Activated B cell treated with CpG ODN at 0.5 μM for 24 hours (primary cell): ENCODE measurements at regions of chr3 and their contacts with region 1.

Region 1: GRCh38 chr3:69120879-69121464 is 1.4 kb downstream of the LMOD3 start:
- DNase-seq: peak; percentile 22
- ATAC-seq: peak; percentile 87
- H3K4me3 Mint-ChIP-seq: no peak overlapping the region
- H3K27ac Mint-ChIP-seq: no peak overlapping the region
- H3K4me1 Mint-ChIP-seq: peaks cover 4% of the 10 kb centered on the region
- H3K27me3 Mint-ChIP-seq: no peaks in the 10 kb centered on the region
- CTCF ChIP-seq: peak; percentile 99

Region 2: DNA sequence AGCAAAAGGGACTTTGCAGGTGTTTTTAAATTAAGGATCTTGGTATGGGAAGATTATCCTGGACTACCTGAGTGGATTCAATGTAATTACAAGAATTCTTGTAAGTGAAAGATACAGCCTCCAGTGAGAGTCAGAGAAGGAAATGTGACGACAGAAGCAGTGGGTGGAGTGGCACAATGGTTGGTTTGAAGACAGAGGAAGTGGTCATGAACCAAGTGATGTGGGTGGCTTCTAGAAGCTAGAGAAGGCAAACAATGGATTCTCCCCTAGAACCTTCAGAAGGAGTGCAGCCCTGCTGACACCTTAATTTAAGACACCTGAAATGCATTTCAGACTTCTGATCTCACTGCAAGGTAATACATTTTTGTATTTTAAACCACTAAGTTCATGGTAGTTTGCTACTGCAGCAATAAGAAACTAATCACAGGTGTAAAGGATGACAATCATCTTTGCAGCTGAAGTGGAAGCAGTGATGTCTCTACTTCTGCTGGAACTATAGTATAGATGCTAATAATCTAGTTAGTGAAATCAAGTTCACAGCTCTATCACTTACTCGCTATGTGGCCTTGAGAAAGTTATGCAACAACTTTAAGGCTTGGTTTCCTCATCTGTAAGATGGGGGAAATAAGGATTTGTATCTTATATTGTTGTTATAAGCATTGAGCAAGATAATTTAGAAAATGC is 1063.2 kb before region 1 on chr3:
- CTCF ChIA-PET with region 1: no interaction called
- POLR2A ChIA-PET with region 1: no interaction called
- intact Hi-C with region 1: no loop called
- DNase-seq: no peak
- ATAC-seq: no peak
- H3K4me3 Mint-ChIP-seq: no peak overlapping the region
- H3K27ac Mint-ChIP-seq: no peak overlapping the region
- H3K4me1 Mint-ChIP-seq: no peaks in the 10 kb centered on the region
- H3K27me3 Mint-ChIP-seq: no peaks in the 10 kb centered on the region
- CTCF ChIP-seq: no peak

Region 3: GRCh38 chr3:68378631-68379030 is 742.3 kb before region 1 on chr3:
- CTCF ChIA-PET with region 1: no interaction called
- POLR2A ChIA-PET with region 1: no interaction called
- intact Hi-C with region 1: no loop called
- DNase-seq: no peak
- ATAC-seq: no peak
- H3K4me3 Mint-ChIP-seq: no peak overlapping the region
- H3K27ac Mint-ChIP-seq: no peak overlapping the region
- H3K4me1 Mint-ChIP-seq: no peaks in the 10 kb centered on the region
- H3K27me3 Mint-ChIP-seq: no peaks in the 10 kb centered on the region
- CTCF ChIP-seq: no peak

Region 4: GRCh38 chr3:69051756-69052471 is 69.1 kb before region 1 on chr3 and contains the start of gene TMF1:
- CTCF ChIA-PET with region 1: interaction called, 18 read pairs
- POLR2A ChIA-PET with region 1: interaction called, 4 read pairs
- intact Hi-C with region 1: loop called (anchors 1 kb)
- DNase-seq: peak; percentile 92
- ATAC-seq: peak; percentile 86
- H3K4me3 Mint-ChIP-seq: peak within 1 kb of the TSS; percentile 95
- H3K27ac Mint-ChIP-seq: peak within 1 kb of the TSS; percentile 98
- H3K4me1 Mint-ChIP-seq: peaks cover 49% of the 10 kb centered on the region
- H3K27me3 Mint-ChIP-seq: no peaks in the 10 kb centered on the region
- CTCF ChIP-seq: no peak
- total RNA-seq, gene TMF1: 36.8 and 43.6 TPM in 2 replicates

Region 5: GRCh38 chr3:69092030-69092516 is 28.9 kb before region 1 on chr3:
- CTCF ChIA-PET with region 1: interaction called, 10 read pairs
- POLR2A ChIA-PET with region 1: no interaction called
- intact Hi-C with region 1: no loop called
- DNase-seq: no peak
- ATAC-seq: peak; percentile 80
- H3K4me3 Mint-ChIP-seq: peak overlapping the region; percentile 82
- H3K27ac Mint-ChIP-seq: peak overlapping the region; percentile 97
- H3K4me1 Mint-ChIP-seq: peaks cover 95% of the 10 kb centered on the region
- H3K27me3 Mint-ChIP-seq: no peaks in the 10 kb centered on the region
- CTCF ChIP-seq: no peak

Region 6: DNA sequence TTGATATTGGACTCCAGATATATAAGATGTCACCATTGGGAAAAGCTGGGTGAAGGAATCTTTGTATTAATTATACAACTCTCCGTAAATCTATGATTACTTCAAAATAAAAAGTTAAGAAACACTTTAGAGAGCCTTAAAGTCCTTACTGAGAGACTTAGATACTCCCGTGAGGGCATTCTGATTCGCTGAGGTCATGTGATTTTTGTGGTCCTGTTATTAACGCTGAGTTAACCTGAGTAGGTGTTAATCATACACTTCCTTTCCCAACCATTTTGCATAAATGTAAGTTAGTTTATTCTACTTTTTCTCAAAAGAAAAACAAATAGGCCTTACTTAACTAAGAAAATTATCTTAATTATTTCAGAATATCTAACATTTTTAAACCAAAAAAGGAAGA is 68.5 kb after region 1 on chr3:
- CTCF ChIA-PET with region 1: no interaction called
- POLR2A ChIA-PET with region 1: no interaction called
- intact Hi-C with region 1: no loop called
- DNase-seq: no peak
- ATAC-seq: no peak
- H3K4me3 Mint-ChIP-seq: no peak overlapping the region
- H3K27ac Mint-ChIP-seq: no peak overlapping the region
- H3K4me1 Mint-ChIP-seq: no peaks in the 10 kb centered on the region
- H3K27me3 Mint-ChIP-seq: no peaks in the 10 kb centered on the region
- CTCF ChIP-seq: no peak

Region 7: DNA sequence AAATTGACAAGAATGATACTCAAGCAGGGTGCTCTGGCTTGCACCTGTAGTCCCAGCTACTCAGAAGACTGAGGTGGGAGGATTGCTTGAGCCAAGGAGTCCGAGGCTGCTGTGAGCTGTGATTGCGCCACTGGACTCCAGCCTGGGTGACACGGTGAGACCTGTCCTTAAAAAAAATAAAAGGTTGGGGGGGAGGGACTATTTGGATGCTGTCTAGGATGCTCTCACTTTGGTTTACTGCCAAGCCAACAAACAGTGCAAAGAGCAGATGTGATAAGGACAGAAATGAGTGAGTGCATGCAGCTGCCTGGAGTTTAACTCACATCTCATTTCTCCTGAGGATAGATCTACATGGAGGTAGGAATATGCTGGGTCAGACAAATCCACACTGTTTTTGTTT is 135.0 kb after region 1 on chr3:
- CTCF ChIA-PET with region 1: no interaction called
- POLR2A ChIA-PET with region 1: no interaction called
- intact Hi-C with region 1: no loop called
- DNase-seq: no peak
- ATAC-seq: no peak
- H3K4me3 Mint-ChIP-seq: no peak overlapping the region
- H3K27ac Mint-ChIP-seq: no peak overlapping the region
- H3K4me1 Mint-ChIP-seq: no peaks in the 10 kb centered on the region
- H3K27me3 Mint-ChIP-seq: no peaks in the 10 kb centered on the region
- CTCF ChIP-seq: no peak

Region 8: DNA sequence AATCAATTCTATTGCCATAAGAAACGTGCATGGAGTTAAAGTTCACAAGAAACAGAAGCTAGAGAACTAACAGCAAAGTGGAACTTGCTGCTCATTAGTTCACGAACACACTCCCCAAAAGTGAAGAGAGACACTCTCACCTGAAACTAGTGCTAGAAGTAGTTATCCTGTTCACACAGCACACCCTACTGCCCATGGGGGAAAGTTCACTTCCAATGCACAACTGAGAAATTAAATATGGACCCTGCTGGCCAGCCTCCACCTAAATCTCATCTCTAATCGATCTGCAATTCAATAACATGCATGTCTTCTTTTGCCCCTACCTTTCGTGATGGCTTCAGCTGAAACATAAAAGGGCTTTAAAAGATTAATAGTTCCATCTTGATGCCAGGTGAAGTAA is 304.3 kb after region 1 on chr3:
- CTCF ChIA-PET with region 1: no interaction called
- POLR2A ChIA-PET with region 1: no interaction called
- intact Hi-C with region 1: loop called (anchors 1 kb)
- DNase-seq: no peak
- ATAC-seq: no peak
- H3K4me3 Mint-ChIP-seq: no peak overlapping the region
- H3K27ac Mint-ChIP-seq: no peak overlapping the region
- H3K4me1 Mint-ChIP-seq: no peaks in the 10 kb centered on the region
- H3K27me3 Mint-ChIP-seq: no peaks in the 10 kb centered on the region
- CTCF ChIP-seq: no peak